CD4-positive, alpha-beta memory T cell (primary cell): ENCODE measurements at regions of chr5 and their contacts with region 1.

Region 1: DNA sequence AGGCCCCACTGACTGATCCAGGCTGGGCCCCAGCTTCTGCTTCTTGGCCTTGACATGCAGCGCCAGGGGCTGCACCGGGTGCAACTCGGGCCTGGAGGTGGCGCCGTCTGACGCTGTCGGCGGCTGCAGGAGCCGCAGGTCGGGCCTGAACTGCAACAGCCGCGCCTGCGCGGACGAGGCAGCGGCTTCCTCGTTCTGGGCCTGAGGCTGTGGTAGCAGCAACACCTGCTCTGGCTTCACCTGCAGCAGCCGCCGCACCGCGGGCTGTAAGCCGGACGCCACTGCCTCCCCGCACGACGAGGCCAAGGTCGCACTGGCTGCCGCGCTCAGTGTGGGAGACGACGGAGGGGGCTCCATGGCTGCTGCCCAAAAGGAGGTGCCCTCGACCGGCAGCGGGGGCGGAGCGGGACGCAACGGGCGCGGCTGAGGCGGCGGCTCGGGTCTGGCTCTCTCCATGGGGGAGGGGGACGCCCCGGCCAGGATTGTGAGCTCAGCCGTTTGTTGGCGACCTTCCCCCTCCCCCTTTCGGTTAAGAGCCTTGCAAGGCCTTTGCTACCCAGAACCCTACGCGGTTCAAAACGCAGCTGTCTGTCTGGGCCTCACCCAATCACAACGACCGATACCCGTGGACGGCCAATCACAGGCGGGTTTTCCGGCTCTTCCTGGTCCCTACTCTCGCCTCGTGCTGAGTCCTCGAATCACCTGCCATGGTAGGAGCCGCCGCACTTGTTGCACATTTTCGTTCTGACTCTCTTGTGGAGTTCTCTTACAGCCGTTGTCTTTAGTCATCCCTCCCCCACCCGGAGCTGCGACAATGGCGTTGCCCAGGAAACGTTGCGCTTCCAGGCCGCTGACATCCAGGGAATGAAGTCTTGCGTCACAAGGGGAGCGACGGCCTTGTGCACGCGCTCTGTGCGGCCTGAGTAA is at the start of gene SOX30:
- DNase-seq: peak; percentile 85 to 89 (median 86)
- H3K4me3 ChIP-seq: peak within 1 kb of the TSS in 1 of 2 donors; percentile 51
- H3K4me3 Mint-ChIP-seq: peak within 1 kb of the TSS; percentile 78 to 89 (median 84)
- H3K27ac ChIP-seq: peak within 1 kb of the TSS; percentile 52
- H3K27ac Mint-ChIP-seq: peak within 1 kb of the TSS; percentile 65 to 91 (median 86)
- H3K4me1 ChIP-seq: peaks cover 18% of the 10 kb centered on the region
- H3K4me1 Mint-ChIP-seq: peaks cover 11 to 26% (median 18%) of the 10 kb centered on the region in 4 donors
- H3K27me3 ChIP-seq: no peaks in the 10 kb centered on the region
- H3K27me3 Mint-ChIP-seq: no peaks in the 10 kb centered on the region
- total RNA-seq, gene SOX30: 0.14 to 0.15 TPM

Region 2: GRCh38 chr5:157046041-157046440 is 605.8 kb before region 1 on chr5:
- CTCF ChIA-PET with region 1: no interaction called
- POLR2A ChIA-PET with region 1: no interaction called
- intact Hi-C with region 1: no loop called
- DNase-seq: no peak
- H3K4me3 ChIP-seq: no peak overlapping the region
- H3K4me3 Mint-ChIP-seq: peak overlapping the region in 1 of 8 donors; percentile 43
- H3K27ac ChIP-seq: no peak overlapping the region
- H3K27ac Mint-ChIP-seq: peak overlapping the region in 3 of 7 donors; percentile 31 to 70 (median 53)
- H3K4me1 ChIP-seq: peaks cover 17% of the 10 kb centered on the region
- H3K4me1 Mint-ChIP-seq: peaks cover 20 to 48% (median 32%) of the 10 kb centered on the region in 4 donors
- H3K27me3 ChIP-seq: no peaks in the 10 kb centered on the region
- H3K27me3 Mint-ChIP-seq: no peaks in the 10 kb centered on the region

Region 3: GRCh38 chr5:157603333-157604190 is 48.3 kb before region 1 on chr5:
- CTCF ChIA-PET with region 1: no interaction called
- POLR2A ChIA-PET with region 1: interaction called, 3 read pairs
- intact Hi-C with region 1: loop called (anchors 2 kb)
- DNase-seq: peak; percentile 72 to 93 (median 75)
- H3K4me3 ChIP-seq: no peak overlapping the region
- H3K4me3 Mint-ChIP-seq: peak overlapping the region; percentile 39 to 84 (median 70)
- H3K27ac ChIP-seq: peak overlapping the region; percentile 68
- H3K27ac Mint-ChIP-seq: peak overlapping the region; percentile 84 to 96 (median 86)
- H3K4me1 ChIP-seq: peaks cover 90% of the 10 kb centered on the region
- H3K4me1 Mint-ChIP-seq: peaks cover 45 to 69% (median 60%) of the 10 kb centered on the region in 4 donors
- H3K27me3 ChIP-seq: no peaks in the 10 kb centered on the region
- H3K27me3 Mint-ChIP-seq: no peaks in the 10 kb centered on the region

Region 4: GRCh38 chr5:157670662-157671591 is 19.0 kb after region 1 on chr5 and contains the start of gene C5orf52:
- CTCF ChIA-PET with region 1: interaction called, 17 read pairs
- POLR2A ChIA-PET with region 1: interaction called, 3 read pairs
- intact Hi-C with region 1: no loop called
- DNase-seq: peak in 2 of 5 donors; percentile 21 to 23
- H3K4me3 ChIP-seq: peak within 1 kb of the TSS; percentile 71 to 85
- H3K4me3 Mint-ChIP-seq: peak within 1 kb of the TSS; percentile 87 to 98 (median 92)
- H3K27ac ChIP-seq: peak within 1 kb of the TSS; percentile 3
- H3K27ac Mint-ChIP-seq: peak within 1 kb of the TSS in 6 of 7 donors; percentile 25 to 90 (median 78)
- H3K4me1 ChIP-seq: peaks cover 13% of the 10 kb centered on the region
- H3K4me1 Mint-ChIP-seq: peaks cover 15 to 27% (median 21%) of the 10 kb centered on the region in 4 donors
- H3K27me3 ChIP-seq: no peaks in the 10 kb centered on the region
- H3K27me3 Mint-ChIP-seq: no peaks in the 10 kb centered on the region
- total RNA-seq, gene C5orf52: not detected

Region 5: DNA sequence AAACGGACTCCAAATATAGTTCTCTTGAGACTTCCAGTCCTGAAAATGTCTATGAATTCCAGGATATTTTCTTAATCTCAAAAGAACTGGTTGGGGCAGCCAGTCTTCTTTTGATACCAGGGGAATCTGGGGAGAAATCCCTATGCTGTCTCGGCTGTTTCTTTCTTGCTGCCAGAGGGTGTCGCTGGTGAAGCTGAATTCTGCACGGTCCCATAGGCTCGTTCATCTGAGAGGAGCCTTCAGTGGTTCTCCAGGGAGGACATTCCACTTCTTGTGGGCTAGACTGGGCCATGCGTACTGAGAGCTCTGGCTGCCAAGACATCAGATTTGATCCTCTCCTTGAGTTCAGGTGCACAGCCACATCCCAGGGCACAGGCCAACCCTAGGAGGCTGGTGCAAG is 362.1 kb after region 1 on chr5:
- CTCF ChIA-PET with region 1: no interaction called
- POLR2A ChIA-PET with region 1: no interaction called
- intact Hi-C with region 1: no loop called
- DNase-seq: no peak
- H3K4me3 ChIP-seq: no peak overlapping the region
- H3K4me3 Mint-ChIP-seq: no peak overlapping the region
- H3K27ac ChIP-seq: no peak overlapping the region
- H3K27ac Mint-ChIP-seq: no peak overlapping the region
- H3K4me1 ChIP-seq: no peaks in the 10 kb centered on the region
- H3K4me1 Mint-ChIP-seq: no peaks in the 10 kb centered on the region
- H3K27me3 ChIP-seq: no peaks in the 10 kb centered on the region
- H3K27me3 Mint-ChIP-seq: peaks cover 17 to 21% of the 10 kb centered on the region in 2 donors